ENCODE measurements at regions of chr11 and their contacts with region 1.

Region 1: GRCh38 chr11:87463486-87464102 is 425.9 kb downstream of the TMEM135 start:
- DNase-seq: peak; percentile 71
- H3K4me3 ChIP-seq: no peak overlapping the region
- H3K27ac ChIP-seq: no peak overlapping the region
- H3K4me1 ChIP-seq: peaks cover 43% of the 10 kb centered on the region
- CTCF ChIP-seq: peak; percentile 85

Region 2: DNA sequence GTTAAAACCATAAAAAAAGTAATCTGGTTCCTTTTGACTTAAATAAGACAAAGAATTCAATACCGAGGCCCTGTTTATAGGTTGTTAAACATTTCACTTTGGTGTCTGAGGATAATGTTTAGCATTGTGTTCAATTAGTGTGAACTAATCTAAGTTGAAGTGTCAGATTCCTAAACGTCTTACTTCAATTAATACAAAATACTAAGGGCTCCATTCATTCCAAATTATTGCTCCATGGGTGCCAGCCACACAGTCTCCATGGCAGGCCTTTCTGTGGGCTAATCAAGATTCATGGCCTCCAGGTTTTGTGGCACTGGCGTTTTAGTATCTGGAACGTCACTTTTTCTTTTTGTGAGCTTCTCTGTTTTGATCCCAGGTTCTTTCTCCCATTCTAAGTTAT is 336.5 kb before region 1 on chr11:
- CTCF ChIA-PET with region 1: no interaction called
- POLR2A ChIA-PET with region 1: no interaction called
- intact Hi-C with region 1: no loop called
- DNase-seq: no peak
- H3K4me3 ChIP-seq: no peak overlapping the region
- H3K27ac ChIP-seq: no peak overlapping the region
- H3K4me1 ChIP-seq: no peaks in the 10 kb centered on the region
- CTCF ChIP-seq: no peak

Region 3: DNA sequence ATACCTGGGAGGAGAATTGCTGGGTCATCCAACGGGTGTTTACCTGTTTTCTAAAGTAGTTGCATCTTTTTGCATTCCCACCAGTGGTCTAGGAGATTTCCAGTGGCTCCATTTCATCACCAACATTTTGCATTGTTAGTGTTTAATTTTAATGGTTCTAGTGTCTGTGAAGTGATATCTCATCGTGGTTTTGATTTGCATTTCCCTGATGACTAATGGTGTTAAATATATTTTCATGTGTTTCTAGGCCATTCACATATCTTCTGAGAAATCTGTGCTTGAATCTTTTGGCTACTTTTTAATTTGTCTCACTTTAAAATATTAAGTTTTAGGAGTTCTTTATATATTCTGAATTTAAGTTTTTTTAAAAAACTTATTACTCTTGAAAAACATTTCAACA is 13.7 kb after region 1 on chr11:
- CTCF ChIA-PET with region 1: interaction called, 3 read pairs
- POLR2A ChIA-PET with region 1: interaction called, 12 read pairs
- intact Hi-C with region 1: no loop called
- DNase-seq: no peak
- H3K4me3 ChIP-seq: no peak overlapping the region
- H3K27ac ChIP-seq: no peak overlapping the region
- H3K4me1 ChIP-seq: no peaks in the 10 kb centered on the region
- CTCF ChIP-seq: no peak

Region 4: GRCh38 chr11:87529486-87529885 is 65.9 kb after region 1 on chr11:
- CTCF ChIA-PET with region 1: no interaction called
- POLR2A ChIA-PET with region 1: no interaction called
- intact Hi-C with region 1: no loop called
- DNase-seq: no peak
- H3K4me3 ChIP-seq: no peak overlapping the region
- H3K27ac ChIP-seq: no peak overlapping the region
- H3K4me1 ChIP-seq: no peaks in the 10 kb centered on the region
- CTCF ChIP-seq: no peak

Region 5: DNA sequence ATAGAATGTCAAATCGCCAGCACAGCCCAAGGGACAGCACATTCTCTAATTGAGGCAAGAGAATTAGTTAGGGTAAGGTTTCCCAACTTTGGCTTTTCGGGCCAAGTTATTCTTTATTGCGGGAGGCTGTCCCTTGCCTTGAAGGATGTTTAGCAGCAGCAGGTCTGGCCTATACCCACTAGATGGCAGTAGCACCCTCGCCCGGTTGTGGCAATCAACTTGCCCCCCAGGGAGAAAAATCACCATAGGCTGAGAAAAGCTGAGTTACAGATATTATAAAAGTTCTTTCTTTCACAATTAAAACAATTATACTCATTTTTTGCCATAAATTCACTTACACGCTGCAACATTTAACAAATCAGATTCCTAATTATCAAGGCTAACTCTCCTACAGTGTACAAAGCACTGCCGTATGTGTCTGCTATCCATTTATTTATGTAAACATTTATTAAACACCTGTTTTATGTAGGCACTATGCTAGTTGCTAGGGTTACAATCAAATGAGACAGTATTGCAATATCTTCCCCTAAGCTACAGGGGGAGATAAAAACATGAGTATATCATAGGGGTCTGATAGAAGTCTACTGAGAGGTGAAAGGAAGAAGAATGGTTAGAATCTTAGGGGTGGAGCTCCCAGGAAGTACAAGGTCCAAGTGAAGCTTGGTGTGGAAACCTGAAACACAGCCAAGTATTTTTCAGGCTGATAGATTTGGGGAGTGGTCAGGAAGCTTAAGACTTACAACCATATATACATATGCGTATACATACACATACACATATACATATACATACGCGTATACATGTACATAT is 259.4 kb after region 1 on chr11:
- CTCF ChIA-PET with region 1: no interaction called
- POLR2A ChIA-PET with region 1: no interaction called
- intact Hi-C with region 1: loop called (anchors 5 kb)
- DNase-seq: peak; percentile 47
- H3K4me3 ChIP-seq: no peak overlapping the region
- H3K27ac ChIP-seq: no peak overlapping the region
- H3K4me1 ChIP-seq: no peaks in the 10 kb centered on the region
- CTCF ChIP-seq: peak; percentile 87

Region 6: GRCh38 chr11:87878373-87878779 is 414.8 kb after region 1 on chr11:
- CTCF ChIA-PET with region 1: no interaction called
- POLR2A ChIA-PET with region 1: no interaction called
- intact Hi-C with region 1: loop called (anchors 5 kb)
- DNase-seq: peak; percentile 53
- H3K4me3 ChIP-seq: no peak overlapping the region
- H3K27ac ChIP-seq: peak overlapping the region; percentile 21
- H3K4me1 ChIP-seq: peaks cover 13% of the 10 kb centered on the region
- CTCF ChIP-seq: peak; percentile 85

Region 7: GRCh38 chr11:88139865-88140264 is 676.3 kb after region 1 on chr11:
- CTCF ChIA-PET with region 1: no interaction called
- POLR2A ChIA-PET with region 1: no interaction called
- intact Hi-C with region 1: no loop called
- DNase-seq: no peak
- H3K4me3 ChIP-seq: no peak overlapping the region
- H3K27ac ChIP-seq: no peak overlapping the region
- H3K4me1 ChIP-seq: no peaks in the 10 kb centered on the region
- CTCF ChIP-seq: no peak